ENCODE measurements at regions of chr3 and their contacts with region 1.

Region 1: GRCh38 chr3:58217209-58217811 is 6.5 kb upstream of the DNASE1L3 start:
- DNase-seq: peak; percentile 77
- H3K4me3 ChIP-seq: no peak overlapping the region
- H3K27ac ChIP-seq: no peak overlapping the region
- H3K4me1 ChIP-seq: no peaks in the 10 kb centered on the region
- H3K27me3 ChIP-seq: no peaks in the 10 kb centered on the region
- CTCF ChIP-seq: peak; percentile 81 to 86
- POLR2A ChIP-seq: no peak

Region 2: DNA sequence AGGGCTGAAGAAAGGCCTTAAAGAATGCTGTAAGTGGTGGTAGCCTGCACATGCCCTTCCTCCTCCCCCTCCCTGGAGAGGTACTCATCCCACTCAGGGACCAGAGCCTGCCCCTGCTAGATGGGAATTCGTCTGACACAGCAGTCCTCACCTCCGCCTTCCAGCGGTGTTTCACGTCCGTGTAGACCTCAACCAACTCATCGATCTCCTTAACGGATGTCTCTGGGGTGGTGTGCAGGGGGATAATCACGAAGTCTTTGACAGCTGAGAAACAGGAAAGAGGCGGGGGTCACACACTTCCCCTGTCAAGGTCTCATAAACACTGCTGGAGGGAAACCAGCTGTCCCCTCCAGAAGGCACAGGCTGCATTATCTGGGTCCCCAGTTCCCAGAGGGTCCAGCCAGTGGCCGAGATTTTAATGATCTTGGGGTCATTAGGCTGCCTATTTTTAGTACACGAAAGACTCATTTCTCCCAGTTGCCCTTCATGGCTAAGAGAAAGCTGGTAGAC is 16.4 kb before region 1 on chr3:
- CTCF ChIA-PET with region 1: interaction called, 23 read pairs
- POLR2A ChIA-PET with region 1: no interaction called
- dilution Hi-C with region 1: no loop called
- intact Hi-C with region 1: loop called (anchors 1 kb)
- DNase-seq: peak; percentile 51
- H3K4me3 ChIP-seq: no peak overlapping the region
- H3K27ac ChIP-seq: no peak overlapping the region
- H3K4me1 ChIP-seq: peaks cover 21% of the 10 kb centered on the region
- H3K27me3 ChIP-seq: no peaks in the 10 kb centered on the region
- CTCF ChIP-seq: no peak
- POLR2A ChIP-seq: no peak

Region 3: GRCh38 chr3:58231666-58232065 is 14.4 kb after region 1 on chr3:
- CTCF ChIA-PET with region 1: interaction called, 18 read pairs
- POLR2A ChIA-PET with region 1: no interaction called
- dilution Hi-C with region 1: no loop called
- intact Hi-C with region 1: no loop called
- DNase-seq: no peak
- H3K4me3 ChIP-seq: no peak overlapping the region
- H3K27ac ChIP-seq: no peak overlapping the region
- H3K4me1 ChIP-seq: peaks cover 2% of the 10 kb centered on the region
- H3K27me3 ChIP-seq: peaks cover 8 to 12% of the 10 kb centered on the region in 2 experiments
- CTCF ChIP-seq: no peak
- POLR2A ChIP-seq: no peak

Region 4: GRCh38 chr3:58271901-58272501 is 54.7 kb after region 1 on chr3:
- CTCF ChIA-PET with region 1: interaction called, 17 read pairs
- POLR2A ChIA-PET with region 1: no interaction called
- dilution Hi-C with region 1: no loop called
- intact Hi-C with region 1: no loop called
- DNase-seq: peak; percentile 79
- H3K4me3 ChIP-seq: no peak overlapping the region
- H3K27ac ChIP-seq: peak overlapping the region; percentile 55
- H3K4me1 ChIP-seq: peaks cover 19% of the 10 kb centered on the region
- H3K27me3 ChIP-seq: no peaks in the 10 kb centered on the region
- CTCF ChIP-seq: no peak
- POLR2A ChIP-seq: no peak

Region 5: GRCh38 chr3:58299839-58300516 is 82.7 kb after region 1 on chr3:
- CTCF ChIA-PET with region 1: interaction called, 42 read pairs
- POLR2A ChIA-PET with region 1: no interaction called
- dilution Hi-C with region 1: no loop called
- intact Hi-C with region 1: loop called (anchors 1 kb)
- DNase-seq: peak; percentile 70
- H3K4me3 ChIP-seq: no peak overlapping the region
- H3K27ac ChIP-seq: no peak overlapping the region
- H3K4me1 ChIP-seq: no peaks in the 10 kb centered on the region
- H3K27me3 ChIP-seq: peaks cover 17 to 18% of the 10 kb centered on the region in 2 experiments
- CTCF ChIP-seq: peak; percentile 33 to 37
- POLR2A ChIP-seq: no peak

Region 6: GRCh38 chr3:58560771-58561311 is 343.5 kb after region 1 on chr3:
- CTCF ChIA-PET with region 1: no interaction called
- POLR2A ChIA-PET with region 1: no interaction called
- dilution Hi-C with region 1: no loop called
- intact Hi-C with region 1: no loop called
- DNase-seq: peak; percentile 91
- H3K4me3 ChIP-seq: no peak overlapping the region
- H3K27ac ChIP-seq: peak overlapping the region; percentile 45
- H3K4me1 ChIP-seq: peaks cover 35% of the 10 kb centered on the region
- H3K27me3 ChIP-seq: no peaks in the 10 kb centered on the region
- CTCF ChIP-seq: peak; percentile 58 to 71
- POLR2A ChIP-seq: peak; percentile 40